Mucosa of descending colon (tissue), 3 donors: ENCODE measurements at regions of chr20 and their contacts with region 1.

Region 1: GRCh38 chr20:22931653-22932608 is 103.2 kb upstream of the SSTR4 start:
- DNase-seq: peak in 1 of 3 donors; percentile 11
- ATAC-seq: peak; percentile 48
- H3K4me3 ChIP-seq: no peak overlapping the region
- H3K4me1 ChIP-seq: no peaks in the 10 kb centered on the region
- CTCF ChIP-seq: no peak

Region 2: GRCh38 chr20:22878166-22878565 is 53.8 kb before region 1 on chr20:
- intact Hi-C with region 1: loop called in 1 of 2 experiments (anchors 10 kb)
- DNase-seq: no peak
- ATAC-seq: no peak
- H3K4me3 ChIP-seq: no peak overlapping the region
- H3K4me1 ChIP-seq: no peaks in the 10 kb centered on the region
- CTCF ChIP-seq: no peak